ENCODE measurements at regions of chr3 and their contacts with region 1.

Region 1: GRCh38 chr3:125519678-125520589 is at the start of gene SNX4:
- DNase-seq: peak; percentile 96 to 97
- ATAC-seq: peak; percentile 97 to 98 (median 98)
- H3K4me3 ChIP-seq: peak within 1 kb of the TSS; percentile 94
- H3K27ac ChIP-seq: peak within 1 kb of the TSS; percentile 75
- H3K4me1 ChIP-seq: peaks cover 11% of the 10 kb centered on the region
- H3K27me3 ChIP-seq: no peaks in the 10 kb centered on the region
- CTCF ChIP-seq: no peak
- total RNA-seq, gene SNX4: 19.1 to 30.1 (median 24.4) TPM

Region 2: DNA sequence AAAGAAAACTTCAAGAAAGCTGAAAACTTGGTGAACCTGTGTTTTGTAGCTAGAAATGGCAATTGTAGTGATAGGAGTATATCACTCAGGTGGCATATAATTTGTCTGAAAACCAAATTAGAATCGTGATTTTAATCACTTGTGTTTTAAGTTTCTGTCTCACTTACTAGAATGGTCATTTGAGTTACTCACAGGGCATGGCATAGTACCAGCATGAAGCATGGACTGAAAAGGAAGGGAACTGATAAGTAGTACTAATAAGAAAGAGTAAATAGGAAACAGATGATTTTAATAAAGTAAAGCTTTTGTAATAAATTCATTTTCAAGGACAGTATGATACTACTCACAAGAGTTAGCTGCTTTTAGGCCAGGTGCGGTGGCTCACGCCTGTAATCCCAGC is 53.3 kb after region 1 on chr3:
- intact Hi-C with region 1: loop called in 1 of 2 experiments (anchors 10 kb)
- DNase-seq: no peak
- ATAC-seq: no peak
- H3K4me3 ChIP-seq: no peak overlapping the region
- H3K27ac ChIP-seq: no peak overlapping the region
- H3K4me1 ChIP-seq: no peaks in the 10 kb centered on the region
- H3K27me3 ChIP-seq: no peaks in the 10 kb centered on the region
- CTCF ChIP-seq: no peak

Region 3: DNA sequence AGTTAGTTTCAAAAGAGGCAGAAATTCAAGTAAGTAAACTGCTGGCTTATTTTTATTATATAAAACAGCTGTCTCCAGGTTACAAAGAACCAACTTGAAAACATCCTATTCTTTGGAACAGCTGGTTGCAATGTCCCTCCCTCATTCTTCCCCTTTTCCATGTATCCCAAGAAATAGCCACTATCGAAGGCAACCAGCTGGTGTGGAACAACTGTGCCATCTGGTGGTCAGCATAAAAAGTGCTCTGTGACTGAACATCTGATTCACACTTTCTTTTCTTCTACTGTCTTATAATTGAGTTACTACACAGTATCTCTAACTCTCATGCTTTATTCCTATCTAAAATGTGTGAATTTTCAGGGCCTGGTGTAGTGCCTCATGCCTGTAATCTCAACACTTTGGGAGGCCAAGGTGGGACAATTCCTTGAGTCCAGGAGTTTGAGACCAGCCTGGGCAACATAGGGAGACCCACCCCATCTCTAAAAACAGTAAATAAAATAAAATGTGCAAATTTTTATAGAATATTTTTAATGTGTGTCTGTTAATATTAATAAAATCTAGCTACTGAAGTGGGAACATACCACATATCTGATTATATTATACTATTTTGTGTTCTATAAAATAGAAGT is 65.8 kb after region 1 on chr3:
- intact Hi-C with region 1: loop called in 1 of 2 experiments (anchors 10 kb)
- DNase-seq: peak in 1 of 2 donors; percentile 23
- ATAC-seq: peak; percentile 73 to 84 (median 78)
- H3K4me3 ChIP-seq: no peak overlapping the region
- H3K27ac ChIP-seq: no peak overlapping the region
- H3K4me1 ChIP-seq: peaks cover 56% of the 10 kb centered on the region
- H3K27me3 ChIP-seq: no peaks in the 10 kb centered on the region
- CTCF ChIP-seq: peak; percentile 84

Measured in psoas muscle (tissue), 8 donors.